Testis (tissue), 5 donors: ENCODE measurements at regions of chr15 and their contacts with region 1.

Region 1: GRCh38 chr15:74604983-74605794 is 10.4 kb upstream of the CLK3 start:
- DNase-seq: no peak
- H3K4me3 ChIP-seq: no peak overlapping the region
- H3K27ac ChIP-seq: no peak overlapping the region
- H3K4me1 ChIP-seq: peaks cover 8% of the 10 kb centered on the region
- H3K27me3 ChIP-seq: no peaks in the 10 kb centered on the region
- CTCF ChIP-seq: no peak
- POLR2A ChIP-seq: no peak

Region 2: GRCh38 chr15:74453925-74454763 is 151.0 kb before region 1 on chr15:
- intact Hi-C with region 1: loop called (anchors 10 kb)
- DNase-seq: no peak
- H3K4me3 ChIP-seq: no peak overlapping the region
- H3K27ac ChIP-seq: no peak overlapping the region
- H3K4me1 ChIP-seq: peaks cover 7% of the 10 kb centered on the region
- H3K27me3 ChIP-seq: no peaks in the 10 kb centered on the region
- CTCF ChIP-seq: no peak
- POLR2A ChIP-seq: no peak

Region 3: DNA sequence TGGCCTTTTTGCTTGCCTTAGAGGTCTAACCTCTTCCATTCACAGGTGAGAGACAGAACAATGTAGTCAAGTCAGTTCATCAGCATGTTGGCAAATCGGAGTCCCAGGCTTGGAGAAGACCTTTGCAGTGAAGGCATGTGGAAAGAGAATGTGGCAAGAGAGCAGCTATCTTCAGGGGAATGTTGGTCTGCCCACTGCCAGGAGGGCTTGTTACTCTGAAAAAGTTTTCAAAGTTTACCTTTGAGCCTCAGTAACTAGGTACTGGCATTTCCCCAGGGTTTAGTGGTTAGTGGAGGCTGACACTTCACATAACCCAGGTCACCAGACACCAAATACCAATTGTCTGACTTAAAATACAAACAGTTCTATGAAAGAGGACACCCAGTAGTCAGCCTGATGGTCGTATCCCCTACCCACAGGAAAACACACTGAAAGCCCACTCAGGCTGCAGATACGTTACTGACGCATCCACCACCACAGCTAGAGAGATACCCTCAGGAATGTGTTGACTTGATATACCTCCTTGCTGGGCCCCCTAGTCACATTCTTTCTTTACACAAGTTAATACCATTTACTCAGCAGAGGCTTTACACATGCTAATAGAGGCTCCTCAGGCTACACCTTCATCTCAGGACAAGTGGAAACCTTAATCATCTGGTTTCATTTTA is 73.9 kb before region 1 on chr15:
- intact Hi-C with region 1: no loop called
- DNase-seq: no peak
- H3K4me3 ChIP-seq: no peak overlapping the region
- H3K27ac ChIP-seq: no peak overlapping the region
- H3K4me1 ChIP-seq: no peaks in the 10 kb centered on the region
- H3K27me3 ChIP-seq: no peaks in the 10 kb centered on the region
- CTCF ChIP-seq: no peak
- POLR2A ChIP-seq: no peak

Region 4: DNA sequence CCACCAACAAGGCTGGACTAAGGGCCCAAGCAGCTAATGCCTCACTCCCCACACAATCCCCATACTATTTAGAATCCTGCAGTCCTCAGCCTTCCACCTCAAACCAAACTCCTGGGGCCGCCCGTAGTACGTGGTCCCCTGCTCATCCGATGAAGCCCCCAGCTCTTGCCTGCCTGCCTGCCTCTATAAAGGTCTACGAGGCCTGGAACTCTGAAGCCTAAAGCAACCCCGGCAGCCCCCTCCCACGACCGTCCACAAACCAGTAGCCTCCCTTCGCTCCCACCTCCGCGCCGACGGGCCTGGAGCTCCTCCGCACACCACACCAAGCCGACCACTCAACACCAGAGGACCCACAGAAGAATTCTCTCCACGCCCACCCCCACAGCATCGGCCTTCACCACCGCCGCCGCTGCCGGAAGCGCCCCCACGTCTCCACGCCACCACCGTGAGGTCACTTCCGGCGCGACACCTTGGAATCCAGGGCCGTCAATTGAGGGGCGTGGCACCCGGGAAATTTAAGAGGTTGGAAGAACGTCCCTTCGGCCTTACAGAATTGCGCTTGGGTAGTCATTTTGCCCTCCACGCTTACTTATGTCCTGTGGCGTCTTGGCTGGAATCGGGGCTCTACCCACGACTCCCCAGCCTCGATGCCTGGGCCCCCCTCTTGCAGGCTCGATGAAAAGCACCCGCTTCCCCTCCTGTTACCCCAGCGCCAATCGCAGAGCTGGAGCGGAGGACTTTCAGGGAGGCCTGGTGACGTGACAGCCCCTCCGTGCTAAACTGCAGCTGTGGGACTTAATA is 90.6 kb after region 1 on chr15 and contains the start of gene EDC3:
- intact Hi-C with region 1: no loop called
- DNase-seq: peak; percentile 96
- H3K4me3 ChIP-seq: peak within 1 kb of the TSS; percentile 91 to 92
- H3K27ac ChIP-seq: peak within 1 kb of the TSS; percentile 87 to 89
- H3K4me1 ChIP-seq: peaks cover 3% of the 10 kb centered on the region
- H3K27me3 ChIP-seq: no peaks in the 10 kb centered on the region
- CTCF ChIP-seq: no peak
- POLR2A ChIP-seq: no peak
- total RNA-seq, gene EDC3: 53.8 to 56.5 TPM